Heart left ventricle (tissue), 16 donors: ENCODE measurements at regions of chr14 and their contacts with region 1.

Region 1: DNA sequence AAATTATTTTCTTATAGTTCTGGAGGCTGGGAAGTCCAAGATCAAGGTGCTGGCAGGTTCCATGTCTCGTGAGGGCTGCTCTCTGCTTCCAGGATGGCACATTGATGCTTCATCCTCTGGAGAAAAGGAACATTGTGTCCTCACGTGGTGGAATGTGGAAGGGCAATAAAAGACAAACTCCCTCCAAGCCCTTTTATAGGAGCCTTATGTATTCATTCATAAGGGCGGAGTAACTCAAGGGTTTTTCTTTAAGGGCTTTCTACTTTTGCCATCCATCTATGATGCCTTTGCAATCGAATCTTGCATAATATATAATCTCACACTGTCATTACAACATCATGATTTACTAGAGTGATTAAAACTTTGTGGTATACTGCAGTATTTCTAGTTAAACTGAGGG is 132.7 kb upstream of the DDHD1 start:
- DNase-seq: no peak
- ATAC-seq: no peak
- H3K4me3 ChIP-seq: no peak overlapping the region
- H3K27ac ChIP-seq: no peak overlapping the region
- H3K4me1 ChIP-seq: no peaks in the 10 kb centered on the region
- H3K27me3 ChIP-seq: no peaks in the 10 kb centered on the region
- CTCF ChIP-seq: no peak
- POLR2A ChIP-seq: no peak

Region 2: GRCh38 chr14:53022593-53022992 is 263.2 kb before region 1 on chr14:
- intact Hi-C with region 1: no loop called
- DNase-seq: no peak
- ATAC-seq: no peak
- H3K4me3 ChIP-seq: no peak overlapping the region
- H3K27ac ChIP-seq: no peak overlapping the region
- H3K4me1 ChIP-seq: peaks cover 0 to 2% (median 0%) of the 10 kb centered on the region in 12 donors
- H3K27me3 ChIP-seq: no peaks in the 10 kb centered on the region
- CTCF ChIP-seq: no peak
- POLR2A ChIP-seq: no peak

Region 3: DNA sequence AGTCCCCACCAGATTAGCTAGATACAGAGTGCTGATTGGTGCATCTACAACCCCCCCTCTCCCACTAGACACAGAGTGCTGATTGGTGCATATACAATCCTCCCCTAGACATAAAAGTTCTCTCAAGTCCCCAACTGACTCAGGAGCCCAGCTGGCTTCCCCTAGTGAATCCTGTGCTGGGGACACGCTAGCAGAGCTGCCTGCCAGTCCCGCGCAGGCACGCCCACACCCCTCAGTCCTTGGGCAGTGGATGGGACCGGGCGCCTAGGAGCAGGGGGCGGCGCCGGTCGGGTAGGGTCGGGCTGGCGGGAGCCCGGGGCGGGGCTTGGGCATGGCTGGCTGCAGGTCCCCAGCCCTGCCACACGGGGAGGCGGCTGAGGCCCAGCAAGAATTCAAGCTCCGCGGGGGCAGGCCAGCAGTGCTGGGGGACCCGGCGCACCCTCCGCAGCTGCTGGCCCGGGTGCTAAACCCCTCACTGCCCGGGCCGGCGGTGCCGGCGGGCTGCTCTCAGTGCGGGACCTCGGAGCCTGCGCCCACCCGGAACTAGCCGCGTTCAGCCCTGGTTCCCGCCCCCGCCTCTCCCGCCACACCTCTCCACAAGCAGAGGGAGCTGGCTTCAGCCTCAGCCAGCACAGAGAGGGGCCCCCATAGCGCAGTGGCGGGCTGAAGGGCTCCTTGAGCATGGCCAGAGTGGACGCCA is 68.4 kb before region 1 on chr14:
- intact Hi-C with region 1: loop called in 1 of 10 experiments (anchors 10 kb)
- DNase-seq: peak; percentile 65 to 86 (median 78)
- ATAC-seq: peak; percentile 92 to 99 (median 98)
- H3K4me3 ChIP-seq: peak overlapping the region; percentile 43 to 81 (median 66)
- H3K27ac ChIP-seq: peak overlapping the region in 8 of 12 donors; percentile 16 to 71 (median 42)
- H3K4me1 ChIP-seq: peaks cover 0 to 10% (median 4%) of the 10 kb centered on the region in 12 donors
- H3K27me3 ChIP-seq: no peaks in the 10 kb centered on the region
- CTCF ChIP-seq: peak in 11 of 12 donors; percentile 32 to 74 (median 56)
- POLR2A ChIP-seq: no peak

Region 4: DNA sequence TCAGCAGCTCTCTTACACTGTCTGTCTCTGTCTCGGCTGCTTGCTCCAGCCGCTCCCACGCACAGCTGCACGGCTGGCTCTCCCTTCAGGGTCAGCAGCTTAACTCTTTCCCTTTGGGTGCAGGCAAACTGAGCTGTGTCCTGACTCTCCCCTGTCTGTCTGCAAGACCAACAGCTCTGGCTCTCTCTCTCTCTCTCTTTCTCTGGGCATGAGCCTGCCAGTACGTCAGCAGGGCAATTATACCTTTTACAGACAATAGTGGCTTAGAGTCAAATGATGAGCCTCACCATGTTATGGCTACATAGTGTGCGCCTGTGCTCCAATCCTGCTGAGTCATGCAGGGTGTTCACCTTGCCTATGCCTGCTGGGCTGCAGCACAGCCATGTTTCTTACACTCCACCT is 12.1 kb before region 1 on chr14:
- intact Hi-C with region 1: no loop called
- DNase-seq: peak in 3 of 5 donors; percentile 29 to 42 (median 40)
- ATAC-seq: peak in 3 of 4 donors; percentile 68 to 81 (median 77)
- H3K4me3 ChIP-seq: no peak overlapping the region
- H3K27ac ChIP-seq: no peak overlapping the region
- H3K4me1 ChIP-seq: peaks cover 0 to 6% (median 0%) of the 10 kb centered on the region in 12 donors
- H3K27me3 ChIP-seq: no peaks in the 10 kb centered on the region
- CTCF ChIP-seq: no peak
- POLR2A ChIP-seq: no peak

Region 5: DNA sequence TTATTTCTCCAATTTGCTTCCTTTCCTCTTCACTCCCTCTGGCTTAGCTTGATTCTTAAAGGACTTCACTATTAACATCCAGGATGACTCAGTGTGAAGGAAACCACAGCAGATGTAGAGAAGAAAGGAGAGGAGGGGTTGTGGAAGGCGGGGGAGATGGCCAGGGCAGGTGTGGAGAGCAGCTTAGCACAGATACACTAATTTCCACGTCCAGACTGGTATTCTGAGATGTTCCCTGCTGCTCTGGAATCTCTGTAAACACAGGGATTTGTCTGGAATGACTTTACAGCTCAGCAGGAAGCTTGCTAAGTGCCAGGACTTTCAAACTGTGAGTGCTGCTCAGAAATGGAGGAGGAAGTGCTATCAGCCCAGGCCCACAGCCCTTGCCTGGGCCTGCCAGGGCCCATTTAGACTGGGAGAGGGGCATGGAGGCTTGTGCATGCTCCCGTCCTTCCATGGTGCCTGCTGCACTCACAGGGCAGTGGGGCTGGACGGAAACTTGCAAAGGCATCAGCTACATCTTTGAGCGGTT is 69.8 kb after region 1 on chr14:
- intact Hi-C with region 1: no loop called
- DNase-seq: no peak
- ATAC-seq: peak in 3 of 4 donors; percentile 66 to 73 (median 71)
- H3K4me3 ChIP-seq: no peak overlapping the region
- H3K27ac ChIP-seq: peak overlapping the region in 4 of 12 donors; percentile 22 to 37 (median 31)
- H3K4me1 ChIP-seq: peaks cover 0 to 10% (median 0%) of the 10 kb centered on the region in 12 donors
- H3K27me3 ChIP-seq: no peaks in the 10 kb centered on the region
- CTCF ChIP-seq: no peak
- POLR2A ChIP-seq: no peak